Uterus (tissue), 4 donors: ENCODE measurements at regions of chr1 and their contacts with region 1.

Region 1: DNA sequence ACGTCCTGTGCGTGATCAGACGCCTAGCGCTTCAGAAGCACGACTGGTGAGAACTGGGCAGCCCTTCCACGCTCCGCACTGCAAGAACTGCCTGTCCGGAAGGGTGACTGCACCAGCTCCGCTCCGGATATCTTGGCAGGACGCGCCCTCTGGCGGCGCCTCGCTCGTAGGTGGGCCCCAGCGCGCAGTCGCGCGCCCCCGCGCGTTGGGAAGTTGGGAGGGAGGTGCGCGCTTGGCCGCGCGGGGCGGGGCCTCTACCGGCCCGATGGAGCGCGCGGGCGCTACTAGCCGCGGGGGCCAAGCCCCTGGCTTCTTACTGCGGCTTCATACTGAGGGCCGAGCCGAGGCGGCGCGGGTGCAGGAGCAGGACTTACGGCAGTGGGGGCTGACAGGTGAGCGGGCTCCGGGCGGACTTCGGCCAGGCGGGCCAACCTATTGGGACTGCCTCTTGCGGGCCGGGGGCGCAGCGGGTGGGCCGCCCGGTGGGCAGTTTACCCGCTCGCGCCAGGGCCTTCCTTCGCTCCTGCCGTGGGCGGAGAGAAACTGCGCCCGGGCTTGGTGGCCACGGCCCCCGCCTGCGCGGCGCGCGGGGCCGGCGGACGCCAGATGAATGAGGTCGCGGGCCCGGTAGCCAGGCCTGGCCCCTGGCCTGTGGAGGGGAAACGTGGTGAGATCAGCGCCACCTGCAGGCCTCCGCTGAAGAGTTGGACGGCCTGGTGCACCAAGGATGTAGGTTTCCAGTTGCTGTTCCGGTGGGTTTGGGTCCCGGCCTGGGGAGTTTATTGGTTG is at the start of gene CHD1L:
- DNase-seq: peak; percentile 93 to 95
- H3K4me3 ChIP-seq: peak within 1 kb of the TSS; percentile 67 to 81
- H3K27ac ChIP-seq: peak within 1 kb of the TSS; percentile 93 to 96
- H3K4me1 ChIP-seq: no peaks in the 10 kb centered on the region
- H3K27me3 ChIP-seq: no peaks in the 10 kb centered on the region
- CTCF ChIP-seq: peak; percentile 80 to 97 (median 91)
- POLR2A ChIP-seq: peak in 1 of 2 donors; percentile 61
- total RNA-seq, gene CHD1L: 23.5 to 41.3 (median 39.5) TPM

Region 2: GRCh38 chr1:147172168-147172992 is 70.3 kb before region 1 on chr1 and contains the start of gene PRKAB2:
- intact Hi-C with region 1: loop called (anchors 5 kb)
- DNase-seq: peak; percentile 95 to 96
- H3K4me3 ChIP-seq: peak within 1 kb of the TSS; percentile 80 to 87
- H3K27ac ChIP-seq: peak within 1 kb of the TSS; percentile 95 to 97
- H3K4me1 ChIP-seq: peaks cover 5 to 7% of the 10 kb centered on the region in 2 donors
- H3K27me3 ChIP-seq: no peaks in the 10 kb centered on the region
- CTCF ChIP-seq: peak; percentile 87 to 96 (median 94)
- POLR2A ChIP-seq: peak; percentile 35 to 73
- total RNA-seq, gene PRKAB2: 10.9 to 22.5 (median 15.2) TPM

Region 3: DNA sequence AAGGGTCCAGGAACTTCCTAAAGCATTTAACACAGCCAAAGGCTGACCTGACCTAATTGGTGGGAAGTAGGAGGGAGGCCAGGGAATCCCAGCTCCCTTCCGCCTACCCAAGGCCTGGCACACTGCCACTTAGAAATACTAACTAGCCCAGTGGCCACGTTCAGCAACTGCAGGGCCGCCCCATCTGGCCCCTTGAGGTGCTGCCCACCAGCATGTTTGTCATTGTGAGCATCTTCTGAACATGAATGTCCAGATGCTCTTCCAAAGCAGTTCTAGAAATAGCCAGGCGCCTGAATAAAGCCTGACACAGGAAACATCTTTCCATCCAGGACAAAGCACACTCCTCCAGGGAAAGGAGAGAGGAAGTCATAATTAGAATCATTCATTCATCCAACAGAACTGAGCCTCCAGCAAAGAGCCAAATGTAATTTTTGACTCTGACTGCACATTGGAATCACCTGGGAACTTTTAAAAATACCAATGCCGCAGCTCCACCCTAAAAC is 254.1 kb after region 1 on chr1:
- intact Hi-C with region 1: no loop called
- DNase-seq: peak; percentile 60 to 66
- H3K4me3 ChIP-seq: no peak overlapping the region
- H3K27ac ChIP-seq: peak overlapping the region; percentile 39 to 50
- H3K4me1 ChIP-seq: no peaks in the 10 kb centered on the region
- H3K27me3 ChIP-seq: no peaks in the 10 kb centered on the region
- CTCF ChIP-seq: peak in 3 of 4 experiments; percentile 25 to 48 (median 44)
- POLR2A ChIP-seq: no peak